ENCODE measurements at regions of chr3 and their contacts with region 1.

Region 1: GRCh38 chr3:111668912-111669488 is 73.9 kb upstream of the ZBED2 start:
- DNase-seq: peak; percentile 74
- H3K4me3 ChIP-seq: no peak overlapping the region
- H3K27ac ChIP-seq: no peak overlapping the region
- H3K4me1 ChIP-seq: peaks cover 25% of the 10 kb centered on the region
- CTCF ChIP-seq: peak; percentile 97

Region 2: GRCh38 chr3:111547631-111548030 is 121.4 kb before region 1 on chr3:
- CTCF ChIA-PET with region 1: no interaction called
- POLR2A ChIA-PET with region 1: no interaction called
- intact Hi-C with region 1: no loop called
- DNase-seq: peak; percentile 1
- H3K4me3 ChIP-seq: no peak overlapping the region
- H3K27ac ChIP-seq: no peak overlapping the region
- H3K4me1 ChIP-seq: peaks cover 4% of the 10 kb centered on the region
- CTCF ChIP-seq: no peak

Region 3: DNA sequence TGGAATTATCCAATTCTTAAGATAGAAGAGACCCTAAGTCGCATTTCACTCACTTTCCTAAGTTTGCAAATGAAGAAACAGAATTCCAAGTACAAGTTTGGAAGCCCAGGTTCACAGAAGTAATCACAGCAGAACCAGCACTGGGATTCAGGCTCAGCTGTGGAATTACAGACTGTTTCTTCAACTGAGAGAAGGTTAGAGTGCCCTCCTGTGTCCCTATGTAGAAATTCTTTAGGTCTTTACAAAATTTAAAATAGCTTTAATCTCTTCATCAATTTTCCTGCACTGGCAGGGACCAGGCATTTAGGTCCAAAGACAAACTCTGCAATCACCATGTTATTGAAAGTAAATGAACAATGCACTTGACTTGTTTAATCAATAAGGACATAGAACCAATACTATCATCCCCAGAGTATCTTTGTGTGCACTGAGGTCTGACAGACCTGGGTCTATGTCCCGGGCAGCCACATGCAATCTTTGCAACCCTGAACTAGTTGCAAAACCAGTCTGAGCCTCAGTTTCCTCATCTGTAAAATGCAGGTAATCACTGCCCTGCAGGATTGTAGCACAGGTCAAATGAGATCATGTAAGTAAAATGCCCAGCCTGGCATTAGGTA is 22.4 kb after region 1 on chr3:
- CTCF ChIA-PET with region 1: interaction called, 10 read pairs
- POLR2A ChIA-PET with region 1: interaction called, 7 read pairs
- intact Hi-C with region 1: loop called (anchors 1 kb)
- DNase-seq: peak; percentile 30
- H3K4me3 ChIP-seq: no peak overlapping the region
- H3K27ac ChIP-seq: no peak overlapping the region
- H3K4me1 ChIP-seq: no peaks in the 10 kb centered on the region
- CTCF ChIP-seq: peak; percentile 77

Region 4: DNA sequence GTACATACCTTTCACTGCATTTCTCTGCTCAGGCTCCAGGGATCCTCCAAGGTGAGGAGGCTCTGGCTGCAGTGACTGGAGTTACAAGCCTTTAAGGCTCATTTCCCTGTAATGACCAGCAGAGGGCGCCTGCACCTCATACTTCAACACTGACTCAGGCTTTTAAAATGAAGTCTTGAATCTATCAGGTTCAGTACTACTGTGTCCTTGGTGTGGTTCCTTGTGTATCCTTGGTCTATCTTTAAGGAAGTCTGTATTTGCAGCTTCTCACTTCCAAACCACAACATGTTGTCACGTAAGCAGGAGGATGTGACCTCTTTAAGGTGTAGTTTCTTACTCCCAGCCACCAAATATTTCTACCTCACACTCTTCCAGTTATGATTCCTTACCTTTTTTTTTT is 48.6 kb after region 1 on chr3:
- CTCF ChIA-PET with region 1: interaction called, 6 read pairs
- POLR2A ChIA-PET with region 1: interaction called, 4 read pairs
- intact Hi-C with region 1: loop called (anchors 1 kb)
- DNase-seq: peak; percentile 78
- H3K4me3 ChIP-seq: no peak overlapping the region
- H3K27ac ChIP-seq: no peak overlapping the region
- H3K4me1 ChIP-seq: peaks cover 6% of the 10 kb centered on the region
- CTCF ChIP-seq: peak; percentile 95

Region 5: GRCh38 chr3:111859974-111860859 is 191.2 kb after region 1 on chr3:
- CTCF ChIA-PET with region 1: no interaction called
- POLR2A ChIA-PET with region 1: no interaction called
- intact Hi-C with region 1: loop called (anchors 2 kb)
- DNase-seq: peak; percentile 85
- H3K4me3 ChIP-seq: peak overlapping the region; percentile 67
- H3K27ac ChIP-seq: no peak overlapping the region
- H3K4me1 ChIP-seq: peaks cover 5% of the 10 kb centered on the region
- CTCF ChIP-seq: peak; percentile 71

Region 6: DNA sequence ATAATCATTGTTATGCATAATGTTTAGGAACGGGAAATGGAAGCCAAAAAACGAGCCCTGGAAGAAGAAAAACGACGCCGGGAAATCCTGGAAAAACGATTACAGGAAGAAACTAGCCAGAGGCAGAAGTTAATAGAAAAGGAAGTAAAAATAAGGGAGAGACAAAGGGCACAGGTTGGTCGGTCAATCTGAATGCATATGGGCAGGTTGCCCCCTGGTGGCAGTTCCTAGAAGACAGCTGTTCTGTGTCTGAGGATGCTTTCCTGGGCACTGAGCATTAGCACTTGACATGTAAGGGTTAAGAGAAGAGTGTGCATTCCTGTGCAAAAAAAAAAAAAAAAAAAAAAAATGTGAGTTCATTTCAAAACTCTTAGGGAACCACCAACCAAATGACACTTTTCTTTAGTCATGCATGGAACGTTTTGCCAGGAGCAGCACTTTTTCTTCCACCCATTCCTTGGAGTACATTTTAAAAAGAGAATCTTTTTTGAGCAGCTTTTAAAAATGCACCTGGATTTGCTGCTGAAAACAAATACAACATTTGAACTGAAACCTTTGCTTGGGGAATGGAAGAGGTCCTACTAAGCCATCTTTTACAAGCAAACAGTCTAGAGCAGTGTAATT is 298.8 kb after region 1 on chr3:
- CTCF ChIA-PET with region 1: interaction called, 4 read pairs
- POLR2A ChIA-PET with region 1: interaction called, 4 read pairs
- intact Hi-C with region 1: loop called (anchors 1 kb)
- DNase-seq: peak; percentile 82
- H3K4me3 ChIP-seq: no peak overlapping the region
- H3K27ac ChIP-seq: no peak overlapping the region
- H3K4me1 ChIP-seq: peaks cover 6% of the 10 kb centered on the region
- CTCF ChIP-seq: peak; percentile 93

Measured in OCI-LY7 (cell line).